Activated naive CD4-positive, alpha-beta T cell treated with anti-CD3 and anti-CD28 coated beads for 36 hours (primary cell): ENCODE measurements at regions of chr1 and their contacts with region 1.

Region 1: GRCh38 chr1:205335643-205336091 is 14.1 kb upstream of the NUAK2 start:
- DNase-seq: peak; percentile 92
- H3K4me3 Mint-ChIP-seq: no peak overlapping the region
- H3K27ac Mint-ChIP-seq: no peak overlapping the region
- H3K4me1 Mint-ChIP-seq: no peaks in the 10 kb centered on the region
- H3K27me3 Mint-ChIP-seq: no peaks in the 10 kb centered on the region

Region 2: DNA sequence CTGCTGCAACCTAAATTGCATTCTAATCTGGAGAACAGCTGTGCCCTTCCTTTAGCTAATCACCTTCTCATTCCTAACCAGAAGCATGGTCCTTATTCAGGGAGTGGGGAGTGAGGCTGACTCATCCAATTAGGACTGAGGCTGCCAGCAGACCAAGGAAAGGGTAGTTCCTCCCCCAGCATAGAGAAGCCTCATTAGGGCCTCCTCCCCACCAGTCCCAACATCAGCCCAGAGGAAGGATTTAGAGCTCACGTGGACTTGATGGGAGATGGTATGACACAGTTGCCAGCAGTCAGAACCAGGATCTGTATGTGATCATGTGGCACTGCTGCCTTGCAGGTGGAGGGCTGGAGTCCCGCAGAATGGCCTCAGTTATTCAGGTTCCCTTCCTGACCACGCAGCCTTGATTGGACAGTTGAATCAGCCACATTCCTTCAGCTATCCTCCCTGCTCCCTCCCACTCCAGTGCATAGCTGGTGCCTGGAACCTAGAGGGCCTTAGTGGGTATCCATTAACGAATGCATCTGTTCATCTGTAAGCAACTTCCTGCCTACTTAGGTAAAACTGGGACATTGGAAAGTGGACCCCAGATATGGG is 13.3 kb after region 1 on chr1:
- CTCF ChIA-PET with region 1: interaction called, 48 read pairs
- intact Hi-C with region 1: loop called (anchors 1 kb)
- DNase-seq: no peak
- H3K4me3 Mint-ChIP-seq: no peak overlapping the region
- H3K27ac Mint-ChIP-seq: no peak overlapping the region
- H3K4me1 Mint-ChIP-seq: peaks cover 5% of the 10 kb centered on the region
- H3K27me3 Mint-ChIP-seq: peaks cover 24% of the 10 kb centered on the region